Activated T-helper 2 cell treated with anti-CD3 and anti-CD28 coated beads, Interferon-gamma antibody, Interleukin-2, Interleukin-4, amounts not matched to agents 10 μg/mL and 5 μg/mL and 100 μg/mL, durations not matched to agents 14 hours and 24 hours and 36 hours (primary cell): ENCODE measurements at regions of chr9 and their contacts with region 1.

Region 1: GRCh38 chr9:128127990-128128835 is 684 bp upstream of the PTGES2 start:
- DNase-seq: peak; percentile 83
- H3K4me3 Mint-ChIP-seq: peak overlapping the region; percentile 94
- H3K27ac Mint-ChIP-seq: peak overlapping the region; percentile 98
- H3K4me1 Mint-ChIP-seq: peaks cover 27% of the 10 kb centered on the region
- H3K27me3 Mint-ChIP-seq: peaks cover 17% of the 10 kb centered on the region

Region 2: DNA sequence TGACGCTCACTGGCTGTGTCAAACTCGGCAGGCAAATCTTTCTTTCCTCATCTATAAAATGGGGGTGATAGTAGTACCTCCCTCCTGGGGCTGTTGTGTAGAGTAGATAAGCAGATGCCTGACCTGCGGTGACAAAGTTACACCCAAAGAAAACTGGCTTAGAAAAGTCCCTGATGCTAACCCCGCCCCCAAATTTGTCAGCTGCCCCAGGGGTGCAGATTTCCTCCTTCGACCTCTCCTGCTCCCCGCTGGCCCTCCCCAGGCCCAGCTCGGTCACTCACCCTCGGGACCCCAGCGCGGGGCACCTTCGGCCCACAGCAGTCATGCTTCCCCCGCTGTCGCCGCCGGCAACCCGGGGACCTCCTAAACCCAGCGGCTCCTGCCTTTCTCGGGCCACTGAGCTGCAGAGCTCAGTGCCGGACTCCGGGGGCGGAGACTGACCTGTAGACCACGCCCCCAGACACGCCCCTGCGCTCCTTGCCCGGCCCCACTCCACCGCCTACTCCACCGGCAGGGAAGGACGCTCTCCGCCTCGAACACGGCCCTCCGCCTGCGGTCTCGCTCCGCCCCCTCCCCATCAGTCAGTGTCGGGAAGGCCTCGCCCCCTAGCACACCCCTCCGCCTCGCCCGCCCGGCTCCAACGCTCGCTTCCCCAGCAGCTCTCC is 357.2 kb before region 1 on chr9:
- intact Hi-C with region 1: loop called (anchors 10 kb)
- DNase-seq: peak; percentile 98
- H3K4me3 Mint-ChIP-seq: peak overlapping the region; percentile 85
- H3K27ac Mint-ChIP-seq: peak overlapping the region; percentile 92
- H3K4me1 Mint-ChIP-seq: peaks cover 56% of the 10 kb centered on the region
- H3K27me3 Mint-ChIP-seq: no peaks in the 10 kb centered on the region

Region 3: DNA sequence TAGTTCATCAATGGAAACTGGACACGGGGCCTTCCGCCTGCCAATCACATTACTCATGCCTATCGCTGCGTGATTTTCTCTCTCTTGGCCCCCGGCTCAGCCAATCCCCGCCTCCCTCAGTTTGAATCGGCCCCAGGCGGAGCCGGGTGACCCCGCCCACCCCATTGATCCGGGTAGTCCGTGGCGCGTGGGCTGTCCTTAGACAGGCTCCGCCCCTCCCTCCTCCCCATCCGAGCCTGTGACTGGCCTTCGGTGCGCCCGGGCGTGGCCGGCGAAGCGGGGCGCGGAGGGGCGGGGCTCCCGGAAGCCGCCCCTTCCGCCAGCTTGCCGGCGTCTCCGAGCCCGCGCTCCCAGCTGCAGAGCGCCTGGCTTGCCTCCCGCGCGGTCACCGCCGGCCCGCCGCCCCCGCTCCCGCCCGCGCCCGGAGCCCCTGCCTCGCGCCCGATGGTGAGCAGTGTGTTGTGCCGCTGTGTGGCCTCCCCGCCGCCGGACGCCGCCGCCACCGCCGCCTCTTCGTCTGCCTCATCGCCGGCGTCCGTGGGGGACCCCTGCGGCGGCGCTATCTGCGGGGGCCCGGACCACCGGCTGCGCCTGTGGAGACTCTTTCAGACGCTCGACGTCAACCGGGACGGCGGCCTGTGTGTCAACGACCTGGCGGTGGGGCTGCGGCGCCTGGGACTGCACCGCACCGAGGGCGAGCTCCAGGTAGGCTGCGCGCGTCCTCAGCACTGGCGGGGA is 60.2 kb before region 1 on chr9 and contains the start of gene SLC25A25:
- intact Hi-C with region 1: loop called (anchors 1 kb)
- DNase-seq: peak; percentile 100
- H3K4me3 Mint-ChIP-seq: peak within 1 kb of the TSS; percentile 93
- H3K27ac Mint-ChIP-seq: peak within 1 kb of the TSS; percentile 73
- H3K4me1 Mint-ChIP-seq: peaks cover 41% of the 10 kb centered on the region
- H3K27me3 Mint-ChIP-seq: no peaks in the 10 kb centered on the region
- total RNA-seq, gene SLC25A25: 11.3 and 11.9 TPM in 2 replicates

Region 4: GRCh38 chr9:128117613-128118471 is 10.4 kb before region 1 on chr9:
- intact Hi-C with region 1: loop called (anchors 1 kb)
- DNase-seq: peak; percentile 88
- H3K4me3 Mint-ChIP-seq: no peak overlapping the region
- H3K27ac Mint-ChIP-seq: peak overlapping the region; percentile 30
- H3K4me1 Mint-ChIP-seq: peaks cover 2% of the 10 kb centered on the region
- H3K27me3 Mint-ChIP-seq: no peaks in the 10 kb centered on the region

Region 5: DNA sequence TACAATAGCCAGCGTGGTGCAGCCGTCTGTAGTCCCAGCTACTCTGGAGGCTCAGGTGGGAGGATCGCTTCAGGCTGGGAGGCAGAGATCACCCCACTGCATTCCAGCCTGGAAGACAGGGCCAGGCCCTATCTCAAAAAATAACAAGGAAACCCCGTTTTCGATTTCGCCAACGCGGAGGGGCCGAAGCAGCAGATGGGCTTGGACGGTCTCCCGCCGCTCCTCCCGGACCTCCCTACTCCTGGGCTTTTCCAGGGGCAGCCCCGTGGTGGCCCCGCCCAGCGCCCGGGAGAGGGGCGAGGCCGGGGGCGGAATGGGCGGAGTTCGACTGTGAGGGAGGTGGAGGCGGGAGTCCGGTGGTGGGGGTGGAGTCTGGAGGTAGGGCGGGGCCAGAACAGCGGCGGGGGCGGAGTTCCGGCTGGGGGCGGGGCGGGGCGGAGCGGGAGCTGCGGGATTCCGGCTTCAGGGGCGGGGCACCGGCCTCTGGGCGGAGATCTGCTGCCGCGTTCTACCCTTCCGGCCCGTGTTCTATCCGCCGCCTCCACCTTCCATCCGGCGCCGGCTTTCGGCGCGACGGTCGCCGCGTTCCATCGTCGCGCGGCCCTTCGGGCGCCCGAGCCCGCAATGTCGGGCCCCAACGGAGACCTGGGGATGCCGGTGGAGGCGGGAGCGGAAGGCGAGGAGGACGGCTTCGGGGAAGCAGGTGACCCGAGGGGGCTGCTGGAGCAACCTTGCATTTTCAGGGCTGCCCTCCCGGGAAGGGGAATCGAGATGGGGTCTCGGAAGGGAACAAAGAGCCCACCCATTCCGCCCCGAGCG is 31.8 kb after region 1 on chr9 and contains the start of gene BBLN:
- intact Hi-C with region 1: loop called (anchors 2 kb)
- DNase-seq: peak; percentile 90
- H3K4me3 Mint-ChIP-seq: peak within 1 kb of the TSS; percentile 81
- H3K27ac Mint-ChIP-seq: peak within 1 kb of the TSS; percentile 83
- H3K4me1 Mint-ChIP-seq: peaks cover 17% of the 10 kb centered on the region
- H3K27me3 Mint-ChIP-seq: no peaks in the 10 kb centered on the region
- total RNA-seq, gene BBLN: 93.8 and 103 TPM in 2 replicates

Region 6: GRCh38 chr9:128275996-128276573 is 147.9 kb after region 1 on chr9 and contains the starts of genes GOLGA2 and SWI5:
- intact Hi-C with region 1: loop called (anchors 5 kb)
- DNase-seq: peak; percentile 100
- H3K4me3 Mint-ChIP-seq: peak within 1 kb of the TSS; percentile 97
- H3K27ac Mint-ChIP-seq: peak within 1 kb of the TSS; percentile 89
- H3K4me1 Mint-ChIP-seq: peaks cover 40% of the 10 kb centered on the region
- H3K27me3 Mint-ChIP-seq: no peaks in the 10 kb centered on the region
- total RNA-seq, gene GOLGA2: 44.0 and 47.9 TPM in 2 replicates
- total RNA-seq, gene SWI5: 13.5 and 13.7 TPM in 2 replicates

Region 7: GRCh38 chr9:128339771-128340690 is 211.8 kb after region 1 on chr9 and contains the start of gene SLC27A4:
- intact Hi-C with region 1: no loop called
- DNase-seq: peak; percentile 81
- H3K4me3 Mint-ChIP-seq: peak within 1 kb of the TSS; percentile 89
- H3K27ac Mint-ChIP-seq: peak within 1 kb of the TSS; percentile 89
- H3K4me1 Mint-ChIP-seq: peaks cover 7% of the 10 kb centered on the region
- H3K27me3 Mint-ChIP-seq: no peaks in the 10 kb centered on the region
- total RNA-seq, gene SLC27A4: 30.5 and 32.0 TPM in 2 replicates